ENCODE measurements at regions of chr5 and their contacts with region 1.

Region 1: DNA sequence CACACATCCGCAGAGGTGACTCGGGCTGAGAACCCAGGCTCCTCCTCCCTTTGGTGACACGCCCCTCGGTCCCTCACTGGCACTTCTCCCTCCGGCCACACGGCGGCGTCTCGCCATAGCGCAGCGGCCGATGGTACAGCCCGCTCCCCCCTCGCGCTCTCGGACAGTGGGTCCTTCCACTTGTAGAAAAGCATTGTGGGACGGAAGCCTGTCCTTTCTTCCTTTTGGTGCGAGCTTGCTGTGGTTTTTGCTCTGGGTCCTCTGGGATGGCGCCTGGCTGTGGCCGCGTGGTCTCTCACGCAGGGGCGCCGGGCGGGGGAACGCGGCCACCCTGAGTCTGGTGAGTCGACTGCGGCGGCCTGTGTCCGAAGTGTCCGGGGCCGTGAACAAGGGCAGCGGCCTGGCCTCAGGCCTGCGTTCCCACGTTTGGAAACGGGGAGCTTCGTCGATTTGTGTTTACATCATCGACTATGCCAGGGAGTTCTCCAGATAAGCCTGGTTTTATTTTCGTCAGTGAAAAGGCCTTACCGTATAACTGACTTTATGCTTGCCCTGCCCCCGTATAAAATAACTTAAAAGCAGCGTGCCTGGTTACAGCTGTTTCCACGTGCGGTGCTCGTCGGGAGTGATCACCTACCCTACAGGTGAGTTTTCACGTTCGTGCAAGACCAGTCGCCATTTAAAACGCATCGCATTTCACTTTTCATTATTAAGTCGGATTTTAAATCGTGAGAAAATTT is 258.3 kb downstream of the EPB41L4A start:
- DNase-seq: peak; percentile 78
- ATAC-seq: peak; percentile 91
- H3K4me3 ChIP-seq: peak overlapping the region; percentile 84 to 89 (median 88)
- H3K27ac ChIP-seq: peak overlapping the region; percentile 78
- H3K4me1 ChIP-seq: peaks cover 44% of the 10 kb centered on the region
- H3K27me3 ChIP-seq: peaks cover 0 to 5% of the 10 kb centered on the region in 2 experiments; a peak in 2 of 5 replicates
- CTCF ChIP-seq: peak; percentile 99
- EP300 ChIP-seq: peak; percentile 57 to 81; a peak in 3 of 4 replicates
- POLR2A ChIP-seq: peak; percentile 98 to 99
- RAD21 ChIP-seq: peak; percentile 63; the same call in 1 of the 2 replicates

Region 2: DNA sequence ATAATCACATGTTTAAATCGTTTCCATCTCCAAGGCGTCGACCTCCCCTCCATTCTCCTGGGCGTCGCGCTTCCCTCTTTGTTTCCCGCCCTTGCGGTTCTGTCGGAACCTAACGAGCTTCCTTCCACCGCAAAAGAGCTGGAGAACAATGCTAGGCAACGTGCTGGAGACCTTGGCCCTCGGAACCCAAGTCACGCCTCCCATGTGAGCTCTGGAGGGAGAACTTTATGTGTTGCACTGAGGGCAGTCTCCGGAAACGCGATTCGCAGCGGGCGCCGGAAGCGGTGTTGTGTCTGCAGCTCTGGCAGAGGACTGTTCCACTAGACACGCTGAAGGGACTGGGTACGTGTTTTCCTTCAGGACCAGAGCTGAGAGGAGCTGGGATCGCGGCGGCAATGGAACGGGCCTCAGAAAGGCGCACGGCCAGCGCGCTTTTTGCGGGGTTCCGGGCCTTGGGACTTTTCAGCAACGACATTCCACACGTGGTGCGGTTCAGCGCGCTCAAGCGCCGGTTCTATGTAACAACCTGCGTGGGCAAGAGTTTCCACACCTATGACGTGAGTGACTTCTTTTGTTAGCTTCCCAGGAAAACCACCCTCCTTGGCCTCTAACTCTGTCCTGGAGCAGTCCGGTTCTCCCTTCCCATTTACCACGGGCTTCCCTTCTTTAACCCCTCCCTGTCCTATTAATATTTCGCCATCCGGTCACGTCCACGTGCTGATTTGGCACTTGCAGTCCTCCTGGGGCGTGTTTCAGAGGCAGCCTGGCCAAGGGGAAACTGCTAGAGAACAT is 1068.6 kb before region 1 on chr5 and contains the start of gene WDR36:
- CTCF ChIA-PET with region 1: no interaction called
- POLR2A ChIA-PET with region 1: interaction called, 3 read pairs
- in situ Hi-C with region 1: no loop called
- intact Hi-C with region 1: loop called (anchors 2 kb)
- DNase-seq: peak; percentile 86
- ATAC-seq: peak; percentile 99
- H3K4me3 ChIP-seq: peak within 1 kb of the TSS; percentile 88 to 94 (median 90)
- H3K27ac ChIP-seq: peak within 1 kb of the TSS; percentile 75
- H3K4me1 ChIP-seq: peaks cover 30% of the 10 kb centered on the region
- H3K27me3 ChIP-seq: no peaks in the 10 kb centered on the region; a peak in 1 of 5 replicates
- CTCF ChIP-seq: 0 out of 2 replicates have a peak, but pooled peaks have one; percentile 11
- EP300 ChIP-seq: peak; percentile 34 to 41; a peak in 3 of 4 replicates
- POLR2A ChIP-seq: peak; percentile 91 to 92
- RAD21 ChIP-seq: 0 out of 2 replicates have a peak, but pooled peaks have one; percentile 33
- total RNA-seq, gene WDR36: 40.6 and 62.6 TPM in 2 replicates

Region 3: GRCh38 chr5:111512375-111513130 is 648.3 kb before region 1 on chr5 and contains the start of gene STARD4:
- CTCF ChIA-PET with region 1: no interaction called
- POLR2A ChIA-PET with region 1: interaction called, 9 read pairs
- in situ Hi-C with region 1: no loop called
- intact Hi-C with region 1: loop called (anchors 5 kb)
- DNase-seq: peak; percentile 92
- ATAC-seq: peak; percentile 97
- H3K4me3 ChIP-seq: peak within 1 kb of the TSS; percentile 89 to 97 (median 96)
- H3K27ac ChIP-seq: peak within 1 kb of the TSS; percentile 97
- H3K4me1 ChIP-seq: peaks cover 42% of the 10 kb centered on the region
- H3K27me3 ChIP-seq: no peaks in the 10 kb centered on the region; a peak in 1 of 5 replicates
- CTCF ChIP-seq: no peak
- EP300 ChIP-seq: peak in 1 of 2 experiments; percentile 59; a peak in 2 of 4 replicates
- POLR2A ChIP-seq: peak; percentile 89 to 95
- RAD21 ChIP-seq: peak; percentile 52; the same call in 1 of the 2 replicates
- total RNA-seq, gene STARD4: 66.9 and 92.2 TPM in 2 replicates

Region 4: GRCh38 chr5:112968411-112969106 is 807.7 kb after region 1 on chr5:
- CTCF ChIA-PET with region 1: no interaction called
- POLR2A ChIA-PET with region 1: no interaction called
- in situ Hi-C with region 1: no loop called
- intact Hi-C with region 1: loop called (anchors 10 kb)
- DNase-seq: peak; percentile 93
- ATAC-seq: peak; percentile 92
- H3K4me3 ChIP-seq: peak overlapping the region in 2 of 3 experiments; percentile 1 to 47; a peak in 2 of 6 replicates
- H3K27ac ChIP-seq: peak overlapping the region; percentile 69
- H3K4me1 ChIP-seq: peaks cover 52% of the 10 kb centered on the region
- H3K27me3 ChIP-seq: no peaks in the 10 kb centered on the region
- CTCF ChIP-seq: no peak
- EP300 ChIP-seq: peak in 1 of 2 experiments; percentile 88; a peak in 2 of 4 replicates
- POLR2A ChIP-seq: no peak
- RAD21 ChIP-seq: no peak